HEK293T (cell line): ENCODE measurements at regions of chr14 and their contacts with region 1.

Region 1: DNA sequence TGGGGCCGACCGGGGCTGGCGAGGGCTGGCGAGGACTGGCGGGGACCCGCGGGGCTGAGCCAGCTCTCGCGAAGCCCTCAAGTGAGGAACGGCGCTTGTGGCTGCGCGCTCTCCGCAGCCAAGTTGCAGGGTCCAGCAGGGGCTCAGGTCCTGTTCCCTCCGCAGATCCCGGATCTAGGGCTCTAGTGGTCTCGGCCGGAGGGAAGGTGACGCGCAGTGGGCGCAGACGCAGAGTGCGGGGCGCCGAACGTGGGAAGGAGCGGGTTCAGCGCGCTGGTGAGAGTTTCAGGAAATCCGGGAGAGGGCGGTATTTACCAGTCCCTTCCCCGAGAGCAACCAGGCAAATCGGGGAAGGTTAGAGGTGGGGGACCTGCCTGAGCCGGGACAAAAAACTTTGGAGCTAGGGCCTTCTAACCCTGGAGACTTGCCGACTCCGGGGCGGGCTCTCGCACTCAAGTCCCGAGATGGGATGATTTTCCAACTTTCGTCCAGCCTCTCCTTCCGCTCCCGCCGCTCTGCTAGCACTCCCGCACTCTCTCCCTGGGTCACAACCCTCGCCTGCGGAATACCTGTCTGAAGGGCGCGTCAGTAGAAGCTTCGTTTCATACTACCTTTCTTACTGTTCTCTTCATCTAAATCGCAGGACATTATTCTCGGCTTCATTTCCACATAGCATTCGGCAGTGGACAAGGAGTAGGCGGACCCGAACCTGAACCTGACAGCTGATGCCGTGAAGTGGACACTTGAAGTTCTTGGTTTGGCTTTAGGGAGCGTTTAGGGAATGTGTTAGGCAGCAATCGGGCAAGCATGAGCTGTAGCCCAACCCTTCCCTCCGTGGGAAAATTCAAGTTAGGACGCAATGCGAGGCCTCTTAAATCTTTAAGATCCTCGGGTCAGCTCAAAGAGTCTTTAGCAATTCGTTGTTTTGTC is 13.6 kb upstream of the PAX9 start:
- DNase-seq: no peak

Region 2: DNA sequence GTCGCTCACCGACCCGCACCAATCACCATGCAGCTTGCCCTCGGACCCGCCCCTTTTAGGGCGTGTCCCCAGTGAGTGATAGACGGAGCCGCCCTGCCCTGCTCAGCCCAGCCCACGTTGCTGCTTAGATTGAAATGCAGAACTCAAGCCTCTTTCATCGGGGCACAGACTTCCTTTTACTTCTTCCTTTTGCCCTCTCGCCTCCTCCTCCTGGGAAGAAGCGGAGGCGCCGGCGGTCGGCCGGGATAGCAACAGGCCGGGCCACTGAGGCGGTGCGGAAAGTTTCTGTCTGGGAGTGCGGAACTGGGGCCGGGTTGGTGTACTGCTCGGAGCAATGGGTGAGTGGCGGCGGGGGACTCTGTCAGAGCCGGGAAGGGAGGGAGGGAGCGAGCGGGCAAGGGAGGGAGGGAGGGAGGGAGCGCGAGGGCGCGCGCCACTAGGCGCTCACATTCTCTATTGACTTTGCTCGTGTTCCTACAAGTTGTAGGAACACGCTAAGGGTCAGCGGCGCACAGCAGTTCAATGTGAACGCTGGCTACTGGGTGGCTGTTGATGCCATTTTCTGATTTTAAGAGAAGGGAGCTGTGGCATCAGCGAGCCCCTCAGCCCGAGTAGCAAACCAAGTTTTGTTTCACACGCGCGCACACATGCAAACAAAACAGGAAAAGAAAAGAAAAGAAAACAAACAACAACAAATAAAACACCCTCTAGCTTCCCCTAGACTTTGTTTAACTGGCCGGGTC is 13.8 kb after region 1 on chr14 and contains the start of gene PAX9:
- CTCF ChIA-PET with region 1: interaction called, 4 read pairs
- POLR2A ChIA-PET with region 1: interaction called, 17 read pairs
- DNase-seq: peak; percentile 94

Region 3: GRCh38 chr14:36773136-36773540 is 125.0 kb after region 1 on chr14:
- CTCF ChIA-PET with region 1: no interaction called
- POLR2A ChIA-PET with region 1: no interaction called
- DNase-seq: peak; percentile 50

Region 4: DNA sequence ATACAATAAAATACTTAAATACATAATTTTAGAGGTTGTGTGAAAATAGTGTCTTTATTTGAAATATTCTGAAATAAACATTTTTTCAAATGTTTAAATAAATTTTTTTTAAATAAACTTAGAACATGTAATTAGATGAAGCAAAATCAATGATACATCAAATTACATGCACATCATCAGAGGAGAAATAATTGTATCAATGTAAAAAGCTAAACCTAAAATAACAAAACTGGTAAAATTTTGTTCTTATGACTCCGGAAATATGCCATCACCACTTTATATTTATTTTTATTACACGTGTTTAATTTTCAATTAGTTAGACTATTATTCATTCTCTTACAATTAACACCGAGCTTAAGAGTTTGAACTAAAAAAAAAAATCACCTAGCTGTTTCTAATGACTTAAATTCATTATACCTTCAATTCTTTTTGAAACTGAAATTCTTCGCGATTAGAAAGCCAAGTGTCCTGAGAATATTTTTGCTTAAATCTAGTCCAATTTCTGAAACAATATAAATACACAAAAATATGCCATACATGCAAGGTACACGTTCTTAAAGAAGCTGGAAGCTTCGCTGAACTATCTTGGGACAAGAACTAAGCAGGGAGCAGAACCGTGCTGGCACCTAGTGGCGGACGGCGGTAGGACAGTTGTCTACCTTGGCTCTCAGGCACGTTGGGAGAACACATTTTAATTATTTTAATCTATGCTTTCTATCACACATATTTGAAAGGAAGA is 293.9 kb after region 1 on chr14:
- CTCF ChIA-PET with region 1: interaction called, 17 read pairs
- POLR2A ChIA-PET with region 1: no interaction called
- DNase-seq: peak; percentile 54